ENCODE measurements at regions of chr11 and their contacts with region 1.

Region 1: GRCh38 chr11:74592441-74593362 is at the start of gene POLD3:
- DNase-seq: peak; percentile 91 to 97 (median 96)
- H3K4me3 ChIP-seq: peak within 1 kb of the TSS; percentile 57 to 100 (median 91)
- H3K27ac ChIP-seq: peak within 1 kb of the TSS in 56 of 59 donors; percentile 11 to 87 (median 64)
- H3K27me3 ChIP-seq: no peaks in the 10 kb centered on the region
- CTCF ChIP-seq: peak in 37 of 56 donors; percentile 12 to 59 (median 32)
- total RNA-seq, gene POLD3: 10.9 to 24.0 (median 16.3) TPM

Region 2: GRCh38 chr11:74492974-74493790 is 99.5 kb before region 1 on chr11 and contains the start of gene LIPT2:
- intact Hi-C with region 1: loop called in 1 of 2 experiments (anchors 2 kb)
- DNase-seq: peak; percentile 80 to 96 (median 94)
- H3K4me3 ChIP-seq: peak within 1 kb of the TSS; percentile 73 to 100 (median 90)
- H3K27ac ChIP-seq: peak within 1 kb of the TSS; percentile 79 to 100 (median 98)
- H3K27me3 ChIP-seq: no peaks in the 10 kb centered on the region
- CTCF ChIP-seq: peak in 24 of 56 donors; percentile 7 to 43 (median 20)
- total RNA-seq, gene LIPT2: 0.65 to 8.6 (median 2.9) TPM in 118 of 120 experiments, not detected in the others

Region 3: DNA sequence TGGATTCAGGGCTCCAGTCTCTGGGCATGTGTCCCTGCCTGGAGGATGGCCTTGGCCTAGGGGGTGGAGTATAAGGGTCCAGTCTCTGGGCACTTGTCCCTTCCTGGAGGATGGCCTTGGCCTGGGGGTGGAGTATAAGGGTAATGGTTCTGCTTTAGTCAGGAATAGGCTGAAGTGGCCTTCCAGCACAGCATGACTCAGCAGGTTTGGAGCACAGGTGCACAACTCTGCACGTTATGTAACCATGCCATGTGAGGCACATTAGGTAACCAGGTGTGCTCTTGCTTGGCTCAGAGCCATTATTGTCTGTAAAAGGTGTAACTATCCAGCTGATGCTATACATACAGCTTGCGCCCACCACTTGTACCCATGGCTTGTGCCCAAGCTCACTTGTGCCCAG is 48.7 kb before region 1 on chr11:
- intact Hi-C with region 1: no loop called
- DNase-seq: no peak
- H3K4me3 ChIP-seq: no peak overlapping the region
- H3K27ac ChIP-seq: no peak overlapping the region
- H3K27me3 ChIP-seq: no peaks in the 10 kb centered on the region
- CTCF ChIP-seq: no peak

Region 4: DNA sequence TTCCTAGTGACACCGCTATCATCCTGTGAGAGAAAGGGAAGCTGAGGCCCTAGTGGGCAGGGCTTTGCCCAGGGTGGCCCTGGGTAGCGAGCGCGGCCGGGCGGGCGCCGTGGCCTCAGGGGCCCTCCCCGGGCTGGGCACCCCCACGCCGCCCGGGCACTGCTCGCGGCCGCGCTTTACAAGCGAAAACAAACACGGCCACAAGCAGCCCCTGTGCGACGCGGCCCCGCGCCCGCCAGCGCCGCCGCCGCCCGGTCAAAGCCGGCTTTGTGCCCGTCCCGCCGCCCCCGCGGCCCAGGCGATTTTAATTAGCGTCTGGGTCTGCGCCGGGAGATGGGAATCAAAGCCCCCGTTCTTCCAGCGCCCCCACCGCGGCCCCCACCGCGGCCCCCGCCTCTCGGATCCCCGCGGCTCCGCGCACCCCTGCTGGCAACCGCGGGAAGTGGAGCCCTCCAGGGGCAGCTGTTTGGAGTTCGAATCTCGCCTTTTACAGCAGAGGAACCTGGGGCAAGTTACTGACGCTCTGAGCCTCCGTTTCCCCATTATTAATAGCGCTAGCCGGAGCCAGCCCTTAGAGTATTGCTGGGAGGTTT is 90.7 kb after region 1 on chr11:
- intact Hi-C with region 1: loop called in 1 of 2 experiments (anchors 5 kb)
- DNase-seq: peak; percentile 53 to 91 (median 81)
- H3K4me3 ChIP-seq: peak overlapping the region; percentile 18 to 70 (median 53)
- H3K27ac ChIP-seq: peak overlapping the region in 58 of 59 donors; percentile 26 to 94 (median 83)
- H3K27me3 ChIP-seq: no peaks in the 10 kb centered on the region
- CTCF ChIP-seq: peak; percentile 25 to 83 (median 68)

Region 5: GRCh38 chr11:74726547-74727182 is 134.0 kb after region 1 on chr11:
- intact Hi-C with region 1: loop called in 1 of 2 experiments (anchors 10 kb)
- DNase-seq: peak; percentile 54 to 82 (median 72)
- H3K4me3 ChIP-seq: no peak overlapping the region
- H3K27ac ChIP-seq: peak overlapping the region in 18 of 59 donors; percentile 7 to 71 (median 32)
- H3K27me3 ChIP-seq: peaks cover 0 to 11% (median 0%) of the 10 kb centered on the region in 45 donors
- CTCF ChIP-seq: peak; percentile 58 to 98 (median 91)

Region 6: GRCh38 chr11:74766905-74767304 is 174.2 kb after region 1 on chr11:
- intact Hi-C with region 1: no loop called
- DNase-seq: no peak
- H3K4me3 ChIP-seq: no peak overlapping the region
- H3K27ac ChIP-seq: no peak overlapping the region
- H3K27me3 ChIP-seq: no peaks in the 10 kb centered on the region
- CTCF ChIP-seq: no peak

Measured in dorsolateral prefrontal cortex (tissue), 120 donors.